ENCODE measurements at regions of chr3 and their contacts with region 1.

Region 1: DNA sequence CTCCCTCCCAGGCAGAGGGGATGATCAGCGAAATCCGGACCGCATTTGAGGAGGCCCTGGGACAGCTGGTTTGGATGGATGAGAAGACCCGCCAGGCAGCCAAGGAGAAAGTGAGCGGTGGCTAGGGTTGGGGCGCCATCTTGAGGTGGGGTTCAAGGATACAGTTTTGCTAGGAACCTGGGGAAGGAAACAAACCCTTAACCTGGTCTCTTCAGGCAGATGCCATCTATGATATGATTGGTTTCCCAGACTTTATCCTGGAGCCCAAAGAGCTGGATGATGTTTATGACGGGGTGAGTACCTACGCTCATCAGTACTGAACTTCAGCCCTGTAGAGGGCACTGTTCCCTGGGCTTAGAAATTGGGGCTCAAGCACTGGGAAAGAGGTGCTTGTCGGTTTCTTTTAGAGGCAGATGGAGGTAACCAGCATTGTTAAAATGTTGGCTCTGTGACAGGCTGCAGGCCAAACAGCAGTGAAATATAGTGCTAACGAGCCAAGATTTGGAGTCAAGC is 9.6 kb upstream of the PSMD2 start:
- DNase-seq: peak; percentile 65
- H3K4me3 ChIP-seq: no peak overlapping the region
- H3K27ac ChIP-seq: no peak overlapping the region
- H3K4me1 ChIP-seq: no peaks in the 10 kb centered on the region
- CTCF ChIP-seq: peak; percentile 90

Region 2: DNA sequence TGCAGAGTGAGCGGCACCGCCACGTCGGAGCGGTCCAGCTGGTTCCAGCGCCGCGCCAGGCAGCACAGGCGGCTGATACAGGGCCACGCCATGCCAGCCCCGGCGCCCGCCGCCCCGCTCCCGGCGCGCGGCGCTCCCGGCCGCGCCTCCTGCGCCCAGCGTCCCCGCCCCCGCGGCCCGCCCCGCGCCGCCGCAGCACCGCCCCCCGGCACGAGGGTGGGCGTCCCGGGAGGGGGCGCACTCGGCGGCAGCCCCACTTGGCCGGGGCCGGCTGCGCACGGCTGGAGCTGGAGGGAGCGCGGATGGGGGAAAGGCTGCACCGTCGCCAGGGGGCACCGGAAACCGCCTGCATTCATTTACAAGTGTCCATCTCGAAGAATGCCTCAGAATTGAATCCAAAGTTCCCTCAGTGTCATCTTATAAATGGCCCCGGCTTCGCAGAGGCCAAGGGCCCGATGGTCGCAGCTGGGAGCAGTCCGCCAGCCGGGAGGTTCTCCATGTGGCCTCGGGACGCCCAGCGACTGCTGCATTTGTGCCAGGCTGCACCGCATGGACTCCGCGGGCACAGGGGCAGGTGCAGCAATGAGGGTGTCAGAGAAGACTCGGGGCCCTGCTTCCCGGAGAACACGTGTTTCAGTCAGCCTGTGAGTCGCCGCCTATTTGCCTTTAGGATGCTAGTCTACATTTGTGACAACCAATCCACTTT is 463.9 kb before region 1 on chr3 and contains the start of gene MAP6D1:
- CTCF ChIA-PET with region 1: no interaction called
- POLR2A ChIA-PET with region 1: no interaction called
- intact Hi-C with region 1: no loop called
- DNase-seq: peak; percentile 66
- H3K4me3 ChIP-seq: peak within 1 kb of the TSS; percentile 66
- H3K27ac ChIP-seq: no peak within 1 kb of the TSS
- H3K4me1 ChIP-seq: peaks cover 14% of the 10 kb centered on the region
- CTCF ChIP-seq: peak; percentile 57
- total RNA-seq, gene MAP6D1: 0.88 and 1.5 TPM in 2 replicates

Region 3: GRCh38 chr3:183895296-183895695 is 394.2 kb before region 1 on chr3:
- CTCF ChIA-PET with region 1: no interaction called
- POLR2A ChIA-PET with region 1: no interaction called
- intact Hi-C with region 1: loop called (anchors 1 kb)
- DNase-seq: peak; percentile 72
- H3K4me3 ChIP-seq: no peak overlapping the region
- H3K27ac ChIP-seq: no peak overlapping the region
- H3K4me1 ChIP-seq: peaks cover 5% of the 10 kb centered on the region
- CTCF ChIP-seq: peak; percentile 92

Region 4: DNA sequence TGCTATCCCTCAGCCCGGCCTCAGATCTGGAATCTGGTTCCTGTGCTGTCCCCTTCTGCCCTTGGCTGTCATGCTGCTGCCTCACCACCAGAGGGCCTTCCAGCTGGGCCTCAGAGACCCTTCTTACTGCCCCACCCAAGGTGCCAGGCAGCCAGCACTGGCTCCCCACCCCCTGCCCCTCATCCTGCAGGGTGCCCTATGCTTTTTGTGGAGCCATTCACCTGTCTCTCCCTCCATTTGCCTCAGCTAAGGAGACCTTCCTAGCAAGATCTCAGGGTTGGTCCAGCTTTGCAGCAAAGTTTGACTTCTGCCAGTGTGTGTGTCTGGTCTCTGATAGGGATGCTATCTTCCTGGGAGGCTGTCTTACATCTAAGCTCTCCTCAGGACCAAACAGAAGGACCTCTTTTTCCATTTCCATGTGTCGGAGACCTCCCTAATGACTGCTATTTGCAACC is 62.0 kb before region 1 on chr3:
- CTCF ChIA-PET with region 1: no interaction called
- POLR2A ChIA-PET with region 1: interaction called, 3 read pairs
- intact Hi-C with region 1: loop called (anchors 1 kb)
- DNase-seq: peak; percentile 65
- H3K4me3 ChIP-seq: no peak overlapping the region
- H3K27ac ChIP-seq: no peak overlapping the region
- H3K4me1 ChIP-seq: peaks cover 7% of the 10 kb centered on the region
- CTCF ChIP-seq: peak; percentile 84